CD4-positive, alpha-beta memory T cell (primary cell): ENCODE measurements at regions of chr9 and their contacts with region 1.

Region 1: DNA sequence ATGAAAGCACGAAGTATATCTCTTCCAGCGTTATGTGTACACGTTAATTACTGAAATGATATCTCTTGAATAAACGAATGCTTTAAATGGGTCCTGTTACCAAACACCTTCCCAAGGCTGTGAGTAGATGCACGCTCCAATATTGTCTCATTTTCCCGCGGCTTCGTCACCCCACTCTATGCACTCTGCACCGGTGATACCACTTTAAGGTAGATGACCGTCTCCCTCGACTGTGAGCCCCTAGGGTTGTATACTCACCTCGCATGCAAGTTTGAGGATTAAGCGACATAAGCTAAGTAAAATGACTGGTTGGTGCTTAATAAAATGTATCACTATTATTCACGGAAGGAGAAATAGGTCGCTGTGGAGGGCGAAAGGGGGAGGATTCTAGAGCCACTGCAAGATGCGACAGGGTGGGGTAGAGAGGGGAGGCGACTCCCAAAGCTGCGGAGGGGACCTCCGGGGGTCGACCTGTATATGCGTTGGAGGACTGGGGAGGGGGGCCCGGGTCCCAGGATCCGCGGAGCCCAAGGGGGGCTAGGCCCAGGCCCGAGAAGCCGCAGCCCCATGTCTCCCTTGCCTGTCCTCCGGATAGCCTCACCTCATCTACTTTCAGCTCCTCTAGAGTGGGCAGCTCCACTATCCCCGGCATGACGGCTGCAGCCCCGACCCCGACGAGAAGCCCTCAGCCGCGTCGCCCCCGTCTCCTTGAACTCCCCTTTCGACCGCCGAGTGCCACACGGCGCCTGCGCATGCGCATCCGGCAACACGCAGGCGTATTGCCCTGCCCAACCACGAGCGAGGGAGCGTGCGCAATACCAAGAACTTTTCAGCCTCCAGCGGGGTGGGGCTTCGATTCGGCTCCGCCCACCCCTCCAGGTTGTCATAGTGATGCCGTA is at the starts of genes MORN5 and NDUFA8:
- DNase-seq: peak; percentile 94 to 96 (median 95)
- H3K4me3 ChIP-seq: peak within 1 kb of the TSS; percentile 89 to 93
- H3K4me3 Mint-ChIP-seq: peak within 1 kb of the TSS; percentile 95 to 99 (median 98)
- H3K27ac ChIP-seq: peak within 1 kb of the TSS; percentile 82
- H3K27ac Mint-ChIP-seq: peak within 1 kb of the TSS; percentile 82 to 99 (median 97)
- H3K4me1 ChIP-seq: peaks cover 25% of the 10 kb centered on the region
- H3K4me1 Mint-ChIP-seq: peaks cover 29 to 48% (median 35%) of the 10 kb centered on the region in 4 donors
- H3K27me3 ChIP-seq: no peaks in the 10 kb centered on the region
- H3K27me3 Mint-ChIP-seq: peaks cover 8 to 10% of the 10 kb centered on the region in 2 donors
- total RNA-seq, gene MORN5: not detected
- total RNA-seq, gene NDUFA8: 17.6 to 20.4 TPM

Region 2: DNA sequence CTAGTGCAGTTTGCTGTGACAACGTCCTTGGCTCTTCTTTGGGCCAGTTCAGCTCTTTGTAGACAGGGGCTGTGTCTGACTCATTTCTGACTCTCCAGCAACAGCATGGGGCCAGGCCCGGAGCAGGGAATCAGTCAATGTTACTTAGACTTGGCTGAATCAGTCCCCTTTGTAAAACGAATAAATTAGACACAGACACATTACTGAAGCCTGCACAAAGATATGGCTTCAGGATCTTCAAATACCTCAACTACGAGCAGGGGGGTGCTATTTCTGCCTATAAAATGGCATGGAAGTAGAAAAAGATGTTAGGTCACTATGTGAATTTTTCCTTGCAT is 270.9 kb before region 1 on chr9:
- CTCF ChIA-PET with region 1: no interaction called
- POLR2A ChIA-PET with region 1: no interaction called
- intact Hi-C with region 1: no loop called
- DNase-seq: no peak
- H3K4me3 ChIP-seq: no peak overlapping the region
- H3K4me3 Mint-ChIP-seq: no peak overlapping the region
- H3K27ac ChIP-seq: no peak overlapping the region
- H3K27ac Mint-ChIP-seq: no peak overlapping the region
- H3K4me1 ChIP-seq: no peaks in the 10 kb centered on the region
- H3K4me1 Mint-ChIP-seq: no peaks in the 10 kb centered on the region
- H3K27me3 ChIP-seq: no peaks in the 10 kb centered on the region
- H3K27me3 Mint-ChIP-seq: no peaks in the 10 kb centered on the region

Region 3: GRCh38 chr9:122075135-122076030 is 83.9 kb before region 1 on chr9:
- CTCF ChIA-PET with region 1: no interaction called
- POLR2A ChIA-PET with region 1: no interaction called
- intact Hi-C with region 1: no loop called
- DNase-seq: no peak
- H3K4me3 ChIP-seq: no peak overlapping the region
- H3K4me3 Mint-ChIP-seq: no peak overlapping the region
- H3K27ac ChIP-seq: no peak overlapping the region
- H3K27ac Mint-ChIP-seq: no peak overlapping the region
- H3K4me1 ChIP-seq: no peaks in the 10 kb centered on the region
- H3K4me1 Mint-ChIP-seq: peaks cover 0 to 3% (median 0%) of the 10 kb centered on the region in 4 donors
- H3K27me3 ChIP-seq: no peaks in the 10 kb centered on the region
- H3K27me3 Mint-ChIP-seq: no peaks in the 10 kb centered on the region

Region 4: DNA sequence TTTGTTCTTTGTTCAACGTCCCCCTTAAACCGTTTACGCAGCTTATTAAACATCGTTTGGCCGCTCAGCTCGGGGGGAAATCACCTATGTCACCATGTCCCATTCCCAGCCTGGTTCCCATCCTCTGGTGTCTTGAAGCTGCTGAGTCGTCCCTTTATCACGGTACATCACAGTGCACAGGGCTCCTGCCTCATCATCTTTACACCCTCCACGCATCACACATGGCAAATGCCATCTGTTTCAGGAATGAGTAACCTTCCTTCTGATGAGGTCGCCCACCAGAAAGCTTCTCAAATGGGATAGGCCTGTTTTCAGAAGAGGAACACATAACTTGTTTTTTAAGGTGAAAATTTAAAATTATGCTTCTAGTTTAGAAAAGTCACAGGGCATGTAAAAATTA is 77.4 kb after region 1 on chr9:
- CTCF ChIA-PET with region 1: no interaction called
- POLR2A ChIA-PET with region 1: no interaction called
- intact Hi-C with region 1: no loop called
- DNase-seq: no peak
- H3K4me3 ChIP-seq: no peak overlapping the region
- H3K4me3 Mint-ChIP-seq: no peak overlapping the region
- H3K27ac ChIP-seq: no peak overlapping the region
- H3K27ac Mint-ChIP-seq: peak overlapping the region in 1 of 7 donors; percentile 15
- H3K4me1 ChIP-seq: no peaks in the 10 kb centered on the region
- H3K4me1 Mint-ChIP-seq: no peaks in the 10 kb centered on the region
- H3K27me3 ChIP-seq: no peaks in the 10 kb centered on the region
- H3K27me3 Mint-ChIP-seq: peaks cover 1 to 2% of the 10 kb centered on the region in 2 donors

Region 5: DNA sequence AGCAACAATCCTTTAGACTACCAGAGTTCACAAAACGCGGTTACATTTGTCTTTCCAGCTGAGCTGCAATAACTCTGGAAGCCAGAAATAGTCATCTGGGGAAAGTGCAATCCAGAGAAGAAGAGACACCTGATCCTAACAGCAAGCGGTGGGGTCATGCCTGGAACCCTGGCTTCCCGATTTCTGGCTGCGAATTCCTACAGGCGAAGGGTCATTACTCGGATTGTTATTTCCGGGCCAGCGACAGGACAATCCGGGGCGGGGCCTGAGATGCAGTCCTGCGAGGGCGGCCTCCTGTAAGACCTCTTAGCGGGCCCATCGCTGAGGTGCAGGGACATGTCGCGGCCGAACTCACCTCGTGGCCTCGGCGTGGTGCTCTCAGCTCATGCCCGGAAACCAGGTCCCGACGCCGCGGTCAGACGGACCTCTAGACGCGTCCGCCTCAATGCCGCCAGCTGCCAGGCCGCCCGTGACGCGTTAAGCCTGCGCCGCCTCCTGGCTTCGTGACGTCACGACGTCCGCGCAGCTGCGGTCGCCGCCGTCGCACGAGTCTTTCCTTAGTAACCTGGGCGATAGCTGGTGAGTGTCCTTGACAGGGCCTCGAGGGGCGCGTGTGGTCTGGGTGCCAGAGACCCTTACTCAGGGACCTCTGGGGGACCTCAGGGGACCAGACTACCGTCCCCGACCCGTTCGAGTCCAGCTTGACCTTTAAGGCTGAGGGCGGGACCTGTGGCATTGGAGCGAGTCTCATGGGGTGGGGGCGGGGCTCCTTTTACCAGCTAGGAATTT is 105.3 kb after region 1 on chr9 and contains the starts of genes MRRF and RBM18:
- CTCF ChIA-PET with region 1: no interaction called
- POLR2A ChIA-PET with region 1: interaction called, 4 read pairs
- intact Hi-C with region 1: loop called (anchors 1 kb)
- DNase-seq: peak; percentile 86 to 91 (median 88)
- H3K4me3 ChIP-seq: peak within 1 kb of the TSS; percentile 93 to 94
- H3K4me3 Mint-ChIP-seq: peak within 1 kb of the TSS; percentile 90 to 99 (median 98)
- H3K27ac ChIP-seq: peak within 1 kb of the TSS; percentile 97
- H3K27ac Mint-ChIP-seq: peak within 1 kb of the TSS; percentile 94 to 100 (median 100)
- H3K4me1 ChIP-seq: peaks cover 50% of the 10 kb centered on the region
- H3K4me1 Mint-ChIP-seq: peaks cover 34 to 68% (median 49%) of the 10 kb centered on the region in 4 donors
- H3K27me3 ChIP-seq: no peaks in the 10 kb centered on the region
- H3K27me3 Mint-ChIP-seq: no peaks in the 10 kb centered on the region
- total RNA-seq, gene MRRF: 26.8 to 27.3 TPM
- total RNA-seq, gene RBM18: 21.3 to 21.4 TPM

Region 6: GRCh38 chr9:122370869-122371755 is 211.8 kb after region 1 on chr9 and contains the start of gene PTGS1:
- CTCF ChIA-PET with region 1: no interaction called
- POLR2A ChIA-PET with region 1: no interaction called
- intact Hi-C with region 1: no loop called
- DNase-seq: no peak
- H3K4me3 ChIP-seq: no peak within 1 kb of the TSS
- H3K4me3 Mint-ChIP-seq: peak within 1 kb of the TSS; percentile 38 to 84 (median 78)
- H3K27ac ChIP-seq: no peak within 1 kb of the TSS
- H3K27ac Mint-ChIP-seq: peak within 1 kb of the TSS in 2 of 7 donors; percentile 46 to 63
- H3K4me1 ChIP-seq: peaks cover 10% of the 10 kb centered on the region
- H3K4me1 Mint-ChIP-seq: peaks cover 6 to 14% (median 6%) of the 10 kb centered on the region in 4 donors
- H3K27me3 ChIP-seq: peaks cover 4% of the 10 kb centered on the region
- H3K27me3 Mint-ChIP-seq: peaks cover 19 to 28% of the 10 kb centered on the region in 2 donors
- total RNA-seq, gene PTGS1: 0.28 to 0.49 TPM